ENCODE measurements at regions of chr10 and their contacts with region 1.

Region 1: DNA sequence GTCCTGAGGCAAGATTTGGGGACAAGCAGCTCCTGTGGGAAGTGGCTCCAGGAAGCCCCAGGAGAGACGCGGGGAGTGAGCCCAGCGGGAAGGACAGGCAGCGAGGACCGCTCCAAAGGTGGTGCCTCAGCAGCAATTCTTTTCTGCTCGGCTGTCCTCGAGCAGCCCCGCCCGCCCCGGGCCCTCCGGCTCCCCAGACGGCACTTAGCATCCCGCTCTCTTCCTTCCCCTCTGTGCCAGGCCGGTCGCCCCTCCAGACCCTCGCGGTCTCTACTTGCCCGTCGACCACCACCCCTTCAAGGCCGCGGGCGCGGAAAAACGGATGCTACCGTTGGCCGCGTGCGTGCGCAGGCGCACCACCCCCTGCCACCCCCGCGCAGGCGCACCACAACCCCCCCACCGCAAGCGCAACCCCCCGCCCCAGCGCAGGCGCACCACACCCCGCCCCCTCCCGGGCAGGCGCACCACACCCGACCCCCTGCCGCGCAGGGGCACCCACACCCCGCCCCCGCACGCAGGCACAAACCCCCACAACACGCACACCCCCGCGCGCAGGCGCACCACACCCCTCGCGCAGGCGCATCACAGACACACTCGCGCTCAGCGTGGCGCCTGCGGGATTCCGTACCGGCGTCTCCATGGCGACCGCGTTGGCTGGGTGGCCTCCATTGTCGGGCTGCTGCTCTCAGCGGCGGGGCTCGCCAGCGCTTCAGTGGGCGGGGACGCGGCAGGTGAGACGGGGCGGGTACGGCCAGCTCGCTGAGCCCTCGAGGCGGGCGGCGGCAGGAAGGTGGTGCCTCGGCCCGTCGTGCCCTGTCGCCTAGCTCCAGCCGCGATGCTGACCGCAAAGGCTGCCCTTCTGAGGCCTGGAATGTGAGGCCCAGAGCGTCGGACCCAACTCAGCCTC is at the start of gene LRRC27:
- DNase-seq: peak; percentile 99 to 100 (median 100)
- ATAC-seq: peak; percentile 86
- H3K4me3 ChIP-seq: peak within 1 kb of the TSS; percentile 86
- H3K4me3 Mint-ChIP-seq: peak within 1 kb of the TSS; percentile 95
- H3K27ac ChIP-seq: peak within 1 kb of the TSS; percentile 62 to 78
- H3K27ac Mint-ChIP-seq: peak within 1 kb of the TSS; percentile 84
- H3K4me1 ChIP-seq: peaks cover 46% of the 10 kb centered on the region
- H3K4me1 Mint-ChIP-seq: peaks cover 75% of the 10 kb centered on the region
- H3K27me3 ChIP-seq: no peaks in the 10 kb centered on the region
- H3K27me3 Mint-ChIP-seq: no peaks in the 10 kb centered on the region
- CTCF ChIP-seq: no peak
- total RNA-seq, gene LRRC27: 2.4 to 2.8 TPM

Region 2: GRCh38 chr10:131900350-131901146 is 431.2 kb before region 1 on chr10 and contains the start of gene PPP2R2D:
- CTCF ChIA-PET with region 1: no interaction called
- POLR2A ChIA-PET with region 1: no interaction called
- intact Hi-C with region 1: loop called in 1 of 2 experiments (anchors 5 kb)
- DNase-seq: peak; percentile 89 to 98 (median 95)
- ATAC-seq: peak; percentile 81
- H3K4me3 ChIP-seq: peak within 1 kb of the TSS; percentile 73
- H3K4me3 Mint-ChIP-seq: peak within 1 kb of the TSS; percentile 97
- H3K27ac ChIP-seq: peak within 1 kb of the TSS; percentile 66 to 82
- H3K27ac Mint-ChIP-seq: peak within 1 kb of the TSS; percentile 96
- H3K4me1 ChIP-seq: peaks cover 65% of the 10 kb centered on the region
- H3K4me1 Mint-ChIP-seq: peaks cover 61% of the 10 kb centered on the region
- H3K27me3 ChIP-seq: no peaks in the 10 kb centered on the region
- H3K27me3 Mint-ChIP-seq: no peaks in the 10 kb centered on the region
- CTCF ChIP-seq: no peak
- total RNA-seq, gene PPP2R2D: 32.6 to 32.9 TPM

Region 3: DNA sequence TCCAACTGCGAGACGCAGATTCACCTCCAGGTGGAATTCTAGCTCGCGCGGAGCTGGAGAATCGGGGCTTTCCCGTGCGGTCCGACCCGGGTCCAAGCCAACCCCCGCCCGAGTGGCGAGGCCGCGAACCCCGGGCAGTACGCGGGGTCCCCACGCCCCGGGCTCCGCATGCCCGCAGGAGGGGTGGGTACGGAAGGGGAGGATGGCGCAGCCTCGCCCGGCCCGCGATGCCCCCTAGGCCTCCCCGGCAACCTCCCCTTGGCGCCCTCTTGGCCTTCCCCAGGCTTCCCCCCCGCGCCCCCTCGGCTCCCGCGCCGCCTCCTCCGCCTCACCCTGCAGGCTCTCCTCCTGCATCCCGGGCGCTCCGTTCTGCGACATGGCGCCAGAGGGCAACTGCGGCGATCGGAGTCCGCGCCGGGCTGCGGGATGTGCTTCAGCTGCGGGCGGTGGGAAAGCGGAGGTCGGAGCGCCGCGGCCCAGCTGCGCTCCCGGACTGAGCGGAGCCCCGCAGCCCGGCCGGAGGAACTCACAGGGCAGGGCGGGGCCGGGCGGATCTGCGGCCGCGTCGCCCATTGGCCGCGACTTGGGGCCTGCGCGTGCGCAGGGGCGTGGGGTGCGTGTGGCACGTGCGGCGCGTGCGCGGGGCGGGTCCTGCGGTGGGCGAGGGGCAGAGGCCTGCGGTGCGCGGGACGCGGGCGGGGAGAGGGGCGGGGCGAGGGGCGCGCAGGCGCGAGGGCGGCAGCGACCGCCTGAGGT is 350.2 kb before region 1 on chr10 and contains the start of gene BNIP3:
- CTCF ChIA-PET with region 1: no interaction called
- POLR2A ChIA-PET with region 1: no interaction called
- intact Hi-C with region 1: loop called in 1 of 2 experiments (anchors 5 kb)
- DNase-seq: peak; percentile 87 to 98 (median 94)
- ATAC-seq: peak; percentile 87
- H3K4me3 ChIP-seq: peak within 1 kb of the TSS; percentile 80
- H3K4me3 Mint-ChIP-seq: peak within 1 kb of the TSS; percentile 90
- H3K27ac ChIP-seq: peak within 1 kb of the TSS; percentile 16 to 55
- H3K27ac Mint-ChIP-seq: peak within 1 kb of the TSS; percentile 81
- H3K4me1 ChIP-seq: peaks cover 53% of the 10 kb centered on the region
- H3K4me1 Mint-ChIP-seq: peaks cover 47% of the 10 kb centered on the region
- H3K27me3 ChIP-seq: no peaks in the 10 kb centered on the region
- H3K27me3 Mint-ChIP-seq: no peaks in the 10 kb centered on the region
- CTCF ChIP-seq: no peak
- total RNA-seq, gene BNIP3: 21.0 to 23.6 TPM

Region 4: GRCh38 chr10:132158122-132158741 is 173.5 kb before region 1 on chr10:
- CTCF ChIA-PET with region 1: no interaction called
- POLR2A ChIA-PET with region 1: no interaction called
- intact Hi-C with region 1: loop called in 1 of 2 experiments (anchors 5 kb)
- DNase-seq: peak in 8 of 14 experiments; percentile 23 to 81 (median 52)
- ATAC-seq: peak; percentile 42
- H3K4me3 ChIP-seq: no peak overlapping the region
- H3K4me3 Mint-ChIP-seq: no peak overlapping the region
- H3K27ac ChIP-seq: peak overlapping the region in 1 of 2 donors; percentile 87
- H3K27ac Mint-ChIP-seq: peak overlapping the region; percentile 88
- H3K4me1 ChIP-seq: peaks cover 37% of the 10 kb centered on the region
- H3K4me1 Mint-ChIP-seq: peaks cover 25% of the 10 kb centered on the region
- H3K27me3 ChIP-seq: no peaks in the 10 kb centered on the region
- H3K27me3 Mint-ChIP-seq: no peaks in the 10 kb centered on the region
- CTCF ChIP-seq: no peak

Region 5: DNA sequence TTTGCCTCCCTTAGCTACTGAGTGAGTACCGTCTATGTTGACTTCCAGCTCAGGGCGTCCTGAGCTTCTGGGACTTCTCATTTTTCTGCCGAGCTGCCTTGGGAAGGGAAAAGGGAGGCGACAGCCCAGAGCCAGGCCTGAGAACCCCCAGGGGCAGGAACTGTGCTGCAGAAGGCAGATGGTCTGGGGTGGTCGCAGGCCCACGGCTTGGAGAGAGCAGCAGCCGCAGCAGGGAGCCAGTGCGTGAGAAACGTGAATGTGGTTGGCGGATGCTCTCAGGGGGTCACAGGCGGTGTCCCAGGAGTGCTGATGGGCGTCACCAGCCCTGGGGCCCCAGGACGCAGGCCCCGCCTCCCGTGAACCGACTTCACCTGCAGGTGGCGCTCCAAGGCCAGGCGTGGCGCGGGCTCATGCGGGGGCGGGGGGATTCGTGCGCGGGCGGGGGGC is 56.0 kb after region 1 on chr10:
- CTCF ChIA-PET with region 1: no interaction called
- POLR2A ChIA-PET with region 1: no interaction called
- intact Hi-C with region 1: loop called in 1 of 2 experiments (anchors 5 kb)
- DNase-seq: peak; percentile 68 to 89 (median 77)
- ATAC-seq: peak; percentile 96
- H3K4me3 ChIP-seq: peak overlapping the region; percentile 22
- H3K4me3 Mint-ChIP-seq: peak overlapping the region; percentile 25
- H3K27ac ChIP-seq: no peak overlapping the region
- H3K27ac Mint-ChIP-seq: peak overlapping the region; percentile 71
- H3K4me1 ChIP-seq: peaks cover 20% of the 10 kb centered on the region
- H3K4me1 Mint-ChIP-seq: no peaks in the 10 kb centered on the region
- H3K27me3 ChIP-seq: no peaks in the 10 kb centered on the region
- H3K27me3 Mint-ChIP-seq: no peaks in the 10 kb centered on the region
- CTCF ChIP-seq: peak; percentile 44

Region 6: GRCh38 chr10:132396495-132397035 is 64.8 kb after region 1 on chr10:
- CTCF ChIA-PET with region 1: no interaction called
- POLR2A ChIA-PET with region 1: interaction called, 4 read pairs
- intact Hi-C with region 1: loop called in 1 of 2 experiments (anchors 2 kb)
- DNase-seq: peak; percentile 45 to 89 (median 66)
- ATAC-seq: peak; percentile 77
- H3K4me3 ChIP-seq: peak overlapping the region; percentile 38
- H3K4me3 Mint-ChIP-seq: no peak overlapping the region
- H3K27ac ChIP-seq: no peak overlapping the region
- H3K27ac Mint-ChIP-seq: no peak overlapping the region
- H3K4me1 ChIP-seq: peaks cover 41% of the 10 kb centered on the region
- H3K4me1 Mint-ChIP-seq: peaks cover 24% of the 10 kb centered on the region
- H3K27me3 ChIP-seq: no peaks in the 10 kb centered on the region
- H3K27me3 Mint-ChIP-seq: no peaks in the 10 kb centered on the region
- CTCF ChIP-seq: no peak

Region 7: GRCh38 chr10:132452631-132453469 is 121.1 kb after region 1 on chr10:
- CTCF ChIA-PET with region 1: no interaction called
- POLR2A ChIA-PET with region 1: no interaction called
- intact Hi-C with region 1: loop called in 1 of 2 experiments (anchors 2 kb)
- DNase-seq: peak; percentile 87 to 97 (median 92)
- ATAC-seq: peak; percentile 93
- H3K4me3 ChIP-seq: peak overlapping the region; percentile 33
- H3K4me3 Mint-ChIP-seq: peak overlapping the region; percentile 42
- H3K27ac ChIP-seq: peak overlapping the region; percentile 79 to 82
- H3K27ac Mint-ChIP-seq: peak overlapping the region; percentile 89
- H3K4me1 ChIP-seq: peaks cover 39% of the 10 kb centered on the region
- H3K4me1 Mint-ChIP-seq: peaks cover 34% of the 10 kb centered on the region
- H3K27me3 ChIP-seq: no peaks in the 10 kb centered on the region
- H3K27me3 Mint-ChIP-seq: no peaks in the 10 kb centered on the region
- CTCF ChIP-seq: peak; percentile 92

Measured in CD4-positive, alpha-beta T cell (primary cell).